Naive thymus-derived CD4-positive, alpha-beta T cell (primary cell): ENCODE measurements at regions of chr14 and their contacts with region 1.

Region 1: GRCh38 chr14:69673578-69674305 is 62.3 kb downstream of the SUSD6 start:
- DNase-seq: no peak
- ATAC-seq: peak; percentile 56
- H3K4me3 ChIP-seq: peak overlapping the region; percentile 9
- H3K4me3 Mint-ChIP-seq: peak overlapping the region; percentile 39 to 80 (median 64)
- H3K27ac ChIP-seq: peak overlapping the region; percentile 55
- H3K27ac Mint-ChIP-seq: peak overlapping the region; percentile 43 to 91 (median 80)
- H3K4me1 ChIP-seq: peaks cover 46 to 67% of the 10 kb centered on the region in 2 donors
- H3K4me1 Mint-ChIP-seq: peaks cover 64 to 89% (median 82%) of the 10 kb centered on the region in 7 donors
- H3K27me3 ChIP-seq: no peaks in the 10 kb centered on the region
- H3K27me3 Mint-ChIP-seq: no peaks in the 10 kb centered on the region

Region 2: DNA sequence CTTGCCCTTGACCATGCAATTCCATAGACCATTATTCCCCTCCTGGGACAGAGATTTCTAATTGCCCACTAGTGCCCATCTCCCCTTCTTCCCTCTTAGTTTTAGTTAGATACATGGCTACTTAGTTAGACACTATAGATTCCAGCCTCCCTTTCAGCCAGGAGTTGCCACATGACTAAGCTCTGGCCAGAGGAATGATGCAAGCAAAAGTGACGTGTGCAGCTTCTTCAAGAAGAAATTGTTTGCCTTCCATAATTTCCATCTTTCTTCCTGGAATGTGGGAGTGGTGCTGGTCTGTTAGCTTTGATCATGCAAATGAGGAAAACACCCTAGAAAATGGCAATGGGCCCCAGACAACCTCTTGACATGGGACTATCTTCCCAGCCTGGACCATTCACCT is 120.5 kb before region 1 on chr14:
- CTCF ChIA-PET with region 1: no interaction called
- POLR2A ChIA-PET with region 1: no interaction called
- intact Hi-C with region 1: no loop called
- DNase-seq: no peak
- ATAC-seq: peak; percentile 46
- H3K4me3 ChIP-seq: no peak overlapping the region
- H3K4me3 Mint-ChIP-seq: no peak overlapping the region
- H3K27ac ChIP-seq: no peak overlapping the region
- H3K27ac Mint-ChIP-seq: no peak overlapping the region
- H3K4me1 ChIP-seq: no peaks in the 10 kb centered on the region
- H3K4me1 Mint-ChIP-seq: peaks cover 0 to 2% (median 0%) of the 10 kb centered on the region in 7 donors
- H3K27me3 ChIP-seq: no peaks in the 10 kb centered on the region
- H3K27me3 Mint-ChIP-seq: peaks cover 13 to 37% (median 28%) of the 10 kb centered on the region in 5 donors

Region 3: DNA sequence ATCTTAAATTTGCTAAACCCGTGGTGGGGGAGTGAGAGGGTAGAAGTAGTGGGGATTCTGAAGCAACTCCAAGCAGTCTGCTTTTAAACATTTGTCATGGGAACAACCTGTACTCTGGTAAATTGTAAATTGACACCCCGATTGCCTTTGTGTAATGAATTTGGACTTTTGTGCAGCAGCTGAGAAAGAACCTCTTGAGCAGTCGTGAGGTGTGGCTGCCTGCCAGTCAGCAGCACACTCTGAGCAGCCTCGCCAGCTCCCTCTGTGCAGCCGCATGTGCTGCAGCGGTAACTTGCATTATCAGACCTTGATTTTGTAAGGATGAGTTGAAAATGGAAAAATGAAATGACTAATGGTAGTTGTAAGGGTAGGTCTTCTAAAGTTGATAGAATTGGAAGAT is 12.0 kb after region 1 on chr14:
- CTCF ChIA-PET with region 1: interaction called, 3 read pairs
- POLR2A ChIA-PET with region 1: no interaction called
- intact Hi-C with region 1: loop called (anchors 1 to 2 kb)
- DNase-seq: peak in 1 of 9 donors; percentile 38
- ATAC-seq: peak; percentile 34
- H3K4me3 ChIP-seq: no peak overlapping the region
- H3K4me3 Mint-ChIP-seq: peak overlapping the region in 3 of 10 donors; percentile 1 to 78 (median 39)
- H3K27ac ChIP-seq: no peak overlapping the region
- H3K27ac Mint-ChIP-seq: peak overlapping the region in 5 of 9 donors; percentile 14 to 82 (median 57)
- H3K4me1 ChIP-seq: peaks cover 27 to 28% of the 10 kb centered on the region in 2 donors
- H3K4me1 Mint-ChIP-seq: peaks cover 71 to 83% (median 81%) of the 10 kb centered on the region in 7 donors
- H3K27me3 ChIP-seq: no peaks in the 10 kb centered on the region
- H3K27me3 Mint-ChIP-seq: no peaks in the 10 kb centered on the region

Region 4: DNA sequence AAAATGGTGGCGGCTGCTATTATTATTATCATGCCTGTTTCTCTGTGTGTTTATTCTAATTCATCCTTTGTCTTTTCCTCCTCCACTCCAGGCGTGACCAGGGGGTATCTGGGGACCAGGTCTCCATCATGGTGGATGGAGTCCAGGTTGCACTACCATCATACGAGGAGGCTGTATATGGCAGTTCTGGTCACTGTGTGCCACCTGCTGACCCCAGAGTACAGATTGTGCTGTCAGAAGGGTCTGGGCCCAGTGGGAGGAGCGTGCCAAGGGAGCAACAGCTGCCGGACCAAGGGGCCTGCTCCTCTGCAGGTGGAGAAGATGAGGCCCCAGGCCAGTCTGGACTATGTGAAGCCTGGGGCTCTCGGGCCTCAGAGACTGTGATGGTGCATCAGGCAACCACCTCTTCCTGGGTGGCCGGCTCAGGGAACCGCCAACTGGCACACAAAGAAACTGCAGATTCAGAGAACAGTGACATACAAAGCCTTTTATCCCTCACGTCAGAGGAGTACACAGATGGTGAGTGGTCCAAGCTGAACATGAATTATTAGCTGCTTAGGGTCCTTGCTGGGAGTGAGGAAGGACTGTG is 34.9 kb after region 1 on chr14:
- CTCF ChIA-PET with region 1: no interaction called
- POLR2A ChIA-PET with region 1: interaction called, 3 read pairs
- intact Hi-C with region 1: loop called in 1 of 2 experiments (anchors 5 kb)
- DNase-seq: peak in 2 of 9 donors; percentile 20 to 25
- ATAC-seq: peak; percentile 52
- H3K4me3 ChIP-seq: no peak overlapping the region
- H3K4me3 Mint-ChIP-seq: no peak overlapping the region
- H3K27ac ChIP-seq: no peak overlapping the region
- H3K27ac Mint-ChIP-seq: peak overlapping the region in 2 of 9 donors; percentile 36 to 58
- H3K4me1 ChIP-seq: peaks cover 4 to 12% of the 10 kb centered on the region in 2 donors
- H3K4me1 Mint-ChIP-seq: peaks cover 26 to 83% (median 37%) of the 10 kb centered on the region in 7 donors
- H3K27me3 ChIP-seq: no peaks in the 10 kb centered on the region
- H3K27me3 Mint-ChIP-seq: no peaks in the 10 kb centered on the region

Region 5: GRCh38 chr14:69715725-69716477 is 42.2 kb after region 1 on chr14:
- CTCF ChIA-PET with region 1: interaction called, 3 read pairs
- POLR2A ChIA-PET with region 1: no interaction called
- intact Hi-C with region 1: loop called in 1 of 2 experiments (anchors 2 kb)
- DNase-seq: no peak
- ATAC-seq: peak; percentile 29
- H3K4me3 ChIP-seq: no peak overlapping the region
- H3K4me3 Mint-ChIP-seq: peak overlapping the region in 2 of 10 donors; percentile 18 to 72
- H3K27ac ChIP-seq: no peak overlapping the region
- H3K27ac Mint-ChIP-seq: peak overlapping the region in 8 of 9 donors; percentile 9 to 88 (median 50)
- H3K4me1 ChIP-seq: peaks cover 12 to 14% of the 10 kb centered on the region in 2 donors
- H3K4me1 Mint-ChIP-seq: peaks cover 27 to 80% (median 37%) of the 10 kb centered on the region in 7 donors
- H3K27me3 ChIP-seq: no peaks in the 10 kb centered on the region
- H3K27me3 Mint-ChIP-seq: no peaks in the 10 kb centered on the region